Dendritic cell treated with granulocyte-macrophage colony-stimulating factor and Interleukin-4, amounts not matched to agents 40 ng/mL and 50 ng/mL, for 4 days (primary cell): ENCODE measurements at regions of chr3 and their contacts with region 1.

Region 1: DNA sequence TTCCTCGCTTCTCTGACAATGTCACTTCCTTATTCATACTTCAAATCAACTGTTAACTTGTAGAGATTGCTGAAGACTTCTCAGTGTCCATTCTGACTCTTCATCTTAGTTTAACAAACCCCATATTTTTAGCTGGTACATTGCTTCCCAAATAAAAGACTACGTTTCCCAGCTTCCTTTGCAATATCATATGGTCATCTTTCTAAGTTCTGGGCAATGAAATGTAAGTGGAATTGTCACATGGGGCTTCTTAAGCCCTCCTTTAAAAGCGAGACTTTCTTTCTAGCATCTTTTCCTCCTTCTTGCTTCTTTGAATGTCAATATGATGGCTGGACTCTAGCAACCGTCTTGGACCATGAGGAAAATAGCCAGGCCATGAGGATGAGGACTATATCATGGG is 239.0 kb downstream of the ZNF621 start:
- H3K4me3 Mint-ChIP-seq: no peak overlapping the region
- H3K27ac Mint-ChIP-seq: no peak overlapping the region
- H3K4me1 Mint-ChIP-seq: peaks cover 30% of the 10 kb centered on the region
- H3K27me3 Mint-ChIP-seq: no peaks in the 10 kb centered on the region

Region 2: DNA sequence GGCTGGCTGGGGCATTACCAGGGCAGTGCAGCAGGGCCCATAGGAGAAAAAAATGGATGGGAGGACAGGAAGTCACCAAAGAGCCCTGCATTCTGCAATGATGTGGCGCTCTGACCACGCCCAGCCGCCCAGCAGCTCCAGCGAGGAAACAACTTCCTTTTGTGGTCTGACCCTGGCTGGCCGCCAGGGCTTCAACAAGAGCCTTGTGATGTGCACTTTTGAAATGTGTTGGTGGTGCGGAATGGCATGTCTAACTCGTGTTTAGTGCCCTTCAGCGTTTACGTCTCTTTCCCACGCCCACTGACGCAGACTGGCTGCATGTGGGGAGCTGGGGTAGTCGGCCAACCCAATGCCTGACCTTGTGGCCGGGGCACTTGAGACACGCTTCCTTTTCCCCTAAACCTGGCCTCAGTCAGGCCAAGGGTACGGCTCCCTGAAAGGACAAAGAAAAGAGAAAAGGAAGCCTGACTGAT is 353.6 kb after region 1 on chr3:
- intact Hi-C with region 1: loop called (anchors 5 kb)
- H3K4me3 Mint-ChIP-seq: no peak overlapping the region
- H3K27ac Mint-ChIP-seq: peak overlapping the region; percentile 89
- H3K4me1 Mint-ChIP-seq: peaks cover 50% of the 10 kb centered on the region
- H3K27me3 Mint-ChIP-seq: no peaks in the 10 kb centered on the region